ENCODE measurements at regions of chr7 and their contacts with region 1.

Region 1: DNA sequence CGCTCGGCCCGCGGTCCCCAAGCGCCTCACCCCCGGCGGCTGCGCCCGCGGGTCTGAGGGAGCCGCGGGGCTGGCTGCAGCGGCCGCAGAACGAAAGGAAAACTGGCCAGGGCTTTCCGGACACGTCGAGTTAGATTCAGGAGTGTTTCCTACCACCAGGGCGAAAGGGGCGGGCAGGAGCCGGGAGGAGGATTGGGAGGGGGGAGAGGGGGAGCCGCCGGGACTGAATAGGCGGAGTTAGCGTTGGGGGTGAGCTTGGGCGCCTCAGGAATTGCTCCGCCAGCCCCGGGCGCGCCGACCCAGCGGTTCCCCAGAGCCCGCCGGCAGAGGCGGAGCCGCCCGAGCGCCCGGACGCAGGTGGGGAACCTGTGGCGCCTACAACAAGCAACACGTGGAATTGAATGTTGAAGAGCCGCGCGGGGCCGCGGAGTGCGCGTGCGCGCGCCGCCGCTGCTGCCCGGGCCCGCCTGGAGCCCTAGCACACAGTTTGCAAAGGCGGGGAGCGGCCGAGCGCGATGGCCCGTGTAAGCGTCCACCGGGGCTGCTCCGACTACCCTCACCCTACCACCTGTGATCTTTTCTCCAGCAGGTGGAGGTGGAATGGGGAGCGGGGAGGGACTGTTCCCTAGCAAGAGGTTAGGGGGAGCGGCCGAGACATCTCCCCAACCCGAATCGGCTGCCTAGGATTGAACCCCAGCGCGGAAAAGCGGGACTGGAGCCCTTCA is at the start of gene CADPS2:
- DNase-seq: peak; percentile 50 to 53
- ATAC-seq: peak; percentile 78 to 79
- H3K4me3 ChIP-seq: peak within 1 kb of the TSS; percentile 65 to 82 (median 68)
- H3K27ac ChIP-seq: peak within 1 kb of the TSS; percentile 67 to 80 (median 71)
- H3K4me1 ChIP-seq: no peaks in the 10 kb centered on the region
- H3K27me3 ChIP-seq: peaks cover 4 to 19% (median 10%) of the 10 kb centered on the region in 3 donors
- CTCF ChIP-seq: peak in 3 of 5 experiments; percentile 6 to 41 (median 20)
- POLR2A ChIP-seq: peak; percentile 46 to 73
- total RNA-seq, gene CADPS2: 2.1 to 3.7 (median 2.8) TPM

Region 2: GRCh38 chr7:122803323-122803722 is 83.2 kb before region 1 on chr7:
- in situ Hi-C with region 1: no loop called
- intact Hi-C with region 1: loop called (anchors 5 kb)
- DNase-seq: no peak
- ATAC-seq: no peak
- H3K4me3 ChIP-seq: no peak overlapping the region
- H3K27ac ChIP-seq: peak overlapping the region; percentile 27 to 73 (median 47)
- H3K4me1 ChIP-seq: peaks cover 0 to 8% of the 10 kb centered on the region in 2 donors
- H3K27me3 ChIP-seq: no peaks in the 10 kb centered on the region
- CTCF ChIP-seq: peak in 2 of 5 experiments; percentile 23 to 32
- POLR2A ChIP-seq: no peak